ENCODE measurements at regions of chr1 and their contacts with region 1.

Region 1: DNA sequence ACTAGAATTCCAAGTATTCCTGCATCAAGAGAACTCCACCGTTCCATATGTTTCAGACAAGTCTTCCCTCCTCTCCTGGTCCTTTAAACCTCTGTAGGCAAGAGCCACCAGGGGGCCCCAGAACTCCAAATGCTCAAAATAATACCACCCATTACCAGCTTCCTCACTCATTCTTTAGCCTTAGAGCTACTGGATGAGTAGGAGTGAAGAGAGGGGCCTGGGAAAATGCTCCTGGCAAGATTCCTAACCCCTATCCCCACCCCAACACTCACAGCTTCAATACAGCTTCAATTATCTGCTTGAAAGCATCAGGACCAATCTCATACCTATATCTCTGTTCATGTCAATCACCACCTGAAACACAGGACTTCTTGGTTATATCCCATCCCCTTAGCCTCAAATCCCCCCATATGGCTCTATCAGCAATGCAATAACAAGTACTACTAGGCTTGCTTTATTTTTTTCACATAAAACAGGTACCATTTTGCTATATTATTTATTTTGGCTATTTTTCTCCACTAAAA is 9.7 kb downstream of the TOR1AIP2 start:
- DNase-seq: peak in 2 of 10 donors; percentile 20 to 35

Region 2: DNA sequence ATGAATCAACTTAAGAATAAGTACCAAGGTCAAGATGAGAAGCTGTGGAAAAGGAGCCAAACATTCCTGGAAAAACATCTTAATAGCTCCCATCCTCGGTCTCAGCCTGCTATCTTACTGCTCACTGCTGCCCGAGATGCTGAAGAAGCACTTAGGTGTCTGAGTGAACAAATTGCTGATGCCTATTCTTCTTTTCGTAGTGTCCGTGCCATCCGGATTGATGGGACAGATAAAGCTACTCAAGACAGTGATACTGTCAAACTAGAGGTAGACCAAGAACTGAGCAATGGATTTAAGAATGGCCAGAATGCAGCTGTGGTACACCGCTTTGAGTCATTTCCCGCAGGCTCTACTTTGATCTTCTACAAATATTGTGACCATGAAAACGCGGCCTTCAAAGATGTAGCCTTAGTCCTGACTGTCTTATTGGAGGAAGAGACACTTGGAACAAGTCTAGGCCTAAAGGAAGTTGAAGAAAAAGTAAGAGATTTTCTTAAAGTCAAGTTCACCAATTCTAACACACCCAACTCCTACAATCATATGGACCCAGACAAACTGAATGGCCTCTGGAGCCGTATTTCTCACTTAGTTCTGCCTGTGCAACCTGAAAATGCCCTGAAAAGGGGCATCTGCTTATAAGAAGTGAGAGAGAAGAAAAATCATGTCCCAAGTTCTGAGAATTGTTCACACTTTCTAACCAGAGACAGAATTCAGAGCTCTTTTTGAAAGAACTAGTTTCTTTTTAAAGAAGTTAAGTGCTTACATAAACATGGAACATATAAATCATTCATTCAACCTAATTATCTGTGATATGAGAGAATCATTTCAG is 49.9 kb after region 1 on chr1:
- intact Hi-C with region 1: no loop called
- DNase-seq: no peak

Region 3: DNA sequence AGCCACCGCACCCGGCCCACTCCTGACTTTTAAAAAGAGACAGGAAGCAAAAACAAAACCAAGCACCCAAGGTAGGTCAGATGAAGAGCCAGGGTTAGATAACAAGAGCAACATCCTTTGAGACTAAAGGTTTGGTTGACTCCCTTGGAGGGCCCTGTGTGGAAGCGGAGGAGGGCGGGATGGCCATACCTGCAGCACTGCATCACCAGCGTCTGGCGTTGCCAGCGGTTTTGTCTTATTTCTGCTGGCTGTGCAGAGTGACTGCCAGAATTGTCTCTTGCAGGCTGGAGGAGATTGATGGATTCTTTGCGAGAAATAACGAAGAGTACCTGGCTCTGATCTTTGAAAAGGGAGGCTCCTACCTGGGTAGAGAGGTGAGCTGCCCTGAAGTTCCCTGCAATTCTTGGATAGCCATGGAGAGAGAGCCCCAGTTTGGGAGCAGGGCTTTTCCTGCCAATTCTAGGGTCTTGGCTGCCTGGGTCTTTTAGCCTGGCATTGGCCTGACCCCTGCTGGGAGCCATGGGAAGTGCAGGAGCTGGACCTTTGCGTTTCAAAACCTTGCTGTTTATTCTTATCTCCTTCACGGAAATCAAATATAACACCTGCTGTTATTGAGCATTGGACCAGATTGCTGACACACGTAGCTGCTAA is 310.8 kb after region 1 on chr1:
- intact Hi-C with region 1: loop called (anchors 2 kb)
- DNase-seq: peak in 9 of 10 donors; percentile 46 to 95 (median 73)